ENCODE measurements at regions of chr1 and their contacts with region 1.

Region 1: GRCh38 chr1:92994105-92994712 is 32.9 kb upstream of the DIPK1A start:
- DNase-seq: peak; percentile 79
- ATAC-seq: peak; percentile 83
- H3K4me3 Mint-ChIP-seq: no peak overlapping the region
- H3K27ac Mint-ChIP-seq: no peak overlapping the region
- H3K4me1 Mint-ChIP-seq: peaks cover 35% of the 10 kb centered on the region
- H3K27me3 Mint-ChIP-seq: no peaks in the 10 kb centered on the region

Region 2: DNA sequence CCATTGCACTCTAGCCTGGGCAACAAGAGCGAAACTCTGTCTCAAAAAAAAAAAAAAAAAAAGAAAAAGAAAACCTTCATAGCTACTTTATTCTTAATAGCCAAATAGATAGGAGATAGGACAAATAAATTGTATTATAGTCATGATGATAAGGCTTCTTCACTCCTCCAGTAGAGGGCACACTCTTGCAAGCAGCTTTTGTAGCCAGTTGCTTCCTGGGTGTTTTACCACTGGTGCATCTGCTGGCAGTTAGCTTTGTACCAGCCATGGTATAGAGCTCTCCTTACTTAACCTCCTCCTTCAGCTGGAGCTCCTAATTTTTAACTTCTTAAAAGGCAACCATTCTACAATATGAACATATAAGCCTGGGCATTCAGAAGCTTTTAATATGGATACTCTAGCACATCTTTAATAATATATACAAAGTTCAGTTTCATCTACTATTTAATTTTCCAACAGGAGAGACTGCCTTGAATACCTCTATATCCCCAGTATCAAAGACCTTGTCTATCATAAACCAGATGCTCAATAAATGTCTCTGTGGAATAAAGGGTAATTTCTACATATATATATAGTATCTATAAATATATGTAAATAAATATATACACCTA is 245.1 kb before region 1 on chr1:
- CTCF ChIA-PET with region 1: interaction called, 7 read pairs
- POLR2A ChIA-PET with region 1: no interaction called
- intact Hi-C with region 1: loop called in 1 of 2 experiments (anchors 1 kb)
- DNase-seq: peak; percentile 55
- ATAC-seq: peak; percentile 76
- H3K4me3 Mint-ChIP-seq: no peak overlapping the region
- H3K27ac Mint-ChIP-seq: no peak overlapping the region
- H3K4me1 Mint-ChIP-seq: no peaks in the 10 kb centered on the region
- H3K27me3 Mint-ChIP-seq: no peaks in the 10 kb centered on the region

Region 3: DNA sequence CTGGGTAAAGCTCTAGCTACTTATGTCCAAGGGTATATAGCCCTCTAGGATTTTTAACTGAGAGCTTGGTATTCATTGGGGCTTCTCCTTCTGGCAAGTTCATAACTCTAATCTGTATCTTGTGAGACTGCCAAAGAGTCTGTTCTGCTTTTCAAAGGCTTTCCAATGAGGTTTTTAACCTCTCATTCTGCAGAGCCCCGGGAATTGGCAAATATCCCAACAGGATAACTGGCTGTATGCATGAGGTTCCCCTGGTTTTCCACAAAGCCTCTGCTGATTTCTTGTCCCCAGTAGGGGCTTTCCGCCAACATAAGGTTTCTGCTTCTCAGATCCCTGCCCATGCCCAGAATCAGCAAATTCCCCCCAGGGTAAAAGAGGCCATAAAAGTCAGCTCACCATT is 121.5 kb before region 1 on chr1:
- CTCF ChIA-PET with region 1: interaction called, 15 read pairs
- POLR2A ChIA-PET with region 1: no interaction called
- intact Hi-C with region 1: no loop called
- DNase-seq: no peak
- ATAC-seq: no peak
- H3K4me3 Mint-ChIP-seq: no peak overlapping the region
- H3K27ac Mint-ChIP-seq: no peak overlapping the region
- H3K4me1 Mint-ChIP-seq: peaks cover 20% of the 10 kb centered on the region
- H3K27me3 Mint-ChIP-seq: no peaks in the 10 kb centered on the region

Region 4: GRCh38 chr1:92944901-92945747 is 49.1 kb before region 1 on chr1:
- CTCF ChIA-PET with region 1: interaction called, 12 read pairs
- POLR2A ChIA-PET with region 1: no interaction called
- intact Hi-C with region 1: no loop called
- DNase-seq: no peak
- ATAC-seq: no peak
- H3K4me3 Mint-ChIP-seq: no peak overlapping the region
- H3K27ac Mint-ChIP-seq: no peak overlapping the region
- H3K4me1 Mint-ChIP-seq: peaks cover 55% of the 10 kb centered on the region
- H3K27me3 Mint-ChIP-seq: no peaks in the 10 kb centered on the region

Region 5: DNA sequence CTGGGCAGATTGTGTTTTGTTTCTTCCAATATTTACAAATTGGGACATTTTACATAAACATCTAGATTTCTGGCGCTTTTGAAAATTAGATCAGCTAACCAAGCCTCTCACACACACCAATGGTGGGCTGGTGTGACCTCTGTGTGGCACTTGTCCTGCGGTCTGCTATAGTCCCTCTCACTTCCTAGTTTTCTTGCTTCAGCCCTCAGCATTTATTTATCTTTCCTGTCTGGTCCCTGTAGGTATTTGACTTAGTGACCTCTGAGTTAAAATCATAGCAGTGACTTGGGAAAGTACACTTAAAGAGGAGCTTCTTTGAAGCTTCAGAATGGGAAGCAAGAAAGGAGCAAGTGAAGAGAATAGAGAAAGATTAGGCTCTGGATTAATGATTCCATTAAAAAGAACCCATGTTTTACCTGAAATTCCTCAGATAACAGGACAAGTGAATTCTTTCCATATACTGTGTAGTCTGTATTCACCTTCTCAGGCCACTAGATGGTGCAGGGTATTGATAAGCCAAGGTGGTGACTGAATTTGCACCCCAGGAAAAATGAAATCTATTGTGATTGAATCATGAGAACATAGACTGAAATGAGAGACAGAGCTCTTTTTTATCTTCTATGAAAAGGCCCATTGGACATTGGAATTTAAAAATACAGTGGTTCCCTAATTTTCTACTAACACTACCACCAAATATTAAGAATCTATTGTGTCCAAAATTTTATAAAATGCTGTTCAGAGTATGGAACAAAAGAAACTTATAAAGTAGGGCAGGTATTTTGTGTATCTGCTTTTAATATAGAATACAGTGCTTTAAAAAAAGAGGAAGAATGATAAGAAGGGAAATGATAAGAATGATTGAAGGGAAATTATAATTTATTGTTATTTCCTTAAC is 25.8 kb before region 1 on chr1:
- CTCF ChIA-PET with region 1: interaction called, 130 read pairs
- POLR2A ChIA-PET with region 1: no interaction called
- intact Hi-C with region 1: loop called (anchors 1 kb)
- DNase-seq: peak; percentile 32
- ATAC-seq: peak; percentile 70
- H3K4me3 Mint-ChIP-seq: no peak overlapping the region
- H3K27ac Mint-ChIP-seq: no peak overlapping the region
- H3K4me1 Mint-ChIP-seq: peaks cover 31% of the 10 kb centered on the region
- H3K27me3 Mint-ChIP-seq: no peaks in the 10 kb centered on the region

Region 6: GRCh38 chr1:93007941-93008577 is 13.8 kb after region 1 on chr1:
- CTCF ChIA-PET with region 1: interaction called, 20 read pairs
- POLR2A ChIA-PET with region 1: interaction called, 3 read pairs
- intact Hi-C with region 1: no loop called
- DNase-seq: no peak
- ATAC-seq: no peak
- H3K4me3 Mint-ChIP-seq: no peak overlapping the region
- H3K27ac Mint-ChIP-seq: no peak overlapping the region
- H3K4me1 Mint-ChIP-seq: peaks cover 10% of the 10 kb centered on the region
- H3K27me3 Mint-ChIP-seq: peaks cover 9% of the 10 kb centered on the region

Region 7: DNA sequence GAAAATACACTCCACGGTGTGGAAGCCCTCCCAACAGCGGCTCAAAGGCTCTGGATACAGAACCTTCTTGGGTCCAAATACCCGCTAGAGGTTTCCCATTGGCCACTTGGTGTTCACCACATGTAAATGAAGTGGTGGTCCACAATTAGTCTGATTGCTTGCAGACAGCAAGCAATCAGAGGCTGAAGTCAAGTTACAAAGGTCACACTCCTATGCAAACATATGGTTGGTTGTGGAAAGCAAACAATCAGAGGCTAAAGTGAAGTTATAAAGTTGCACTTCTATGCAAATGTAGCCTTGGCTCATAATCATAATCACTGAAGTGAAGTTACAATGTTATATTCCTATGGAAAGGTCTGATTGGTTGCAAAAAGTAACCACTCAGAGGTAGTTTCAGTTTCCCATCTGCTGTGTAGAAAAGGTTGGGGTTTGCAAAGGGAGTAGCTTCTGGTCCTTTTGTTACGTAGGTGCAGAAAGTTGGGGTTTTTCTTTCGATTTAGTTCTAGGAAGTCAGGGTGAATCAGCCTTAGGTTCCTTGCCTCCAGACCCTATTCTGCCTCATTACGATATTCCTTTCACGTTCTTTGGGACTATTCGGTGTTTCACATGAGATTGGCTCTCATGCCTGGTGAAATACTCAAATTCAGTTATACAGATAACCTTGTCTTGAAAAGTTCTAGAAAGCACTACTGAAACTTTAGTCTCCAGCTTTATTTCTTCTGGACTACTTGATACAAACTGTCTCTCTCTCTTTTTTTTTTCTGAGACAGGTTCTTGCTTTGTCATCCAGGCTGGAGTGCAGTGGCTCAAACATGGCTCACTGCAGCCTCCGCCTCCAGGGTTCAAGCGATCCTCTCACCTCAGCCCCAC is 48.2 kb after region 1 on chr1:
- CTCF ChIA-PET with region 1: no interaction called
- POLR2A ChIA-PET with region 1: no interaction called
- intact Hi-C with region 1: no loop called
- DNase-seq: peak; percentile 20
- ATAC-seq: peak; percentile 98
- H3K4me3 Mint-ChIP-seq: peak overlapping the region; percentile 56
- H3K27ac Mint-ChIP-seq: peak overlapping the region; percentile 92
- H3K4me1 Mint-ChIP-seq: peaks cover 30% of the 10 kb centered on the region
- H3K27me3 Mint-ChIP-seq: no peaks in the 10 kb centered on the region

Region 8: GRCh38 chr1:93244298-93245069 is 250.3 kb after region 1 on chr1:
- CTCF ChIA-PET with region 1: no interaction called
- POLR2A ChIA-PET with region 1: no interaction called
- intact Hi-C with region 1: no loop called
- DNase-seq: no peak
- ATAC-seq: no peak
- H3K4me3 Mint-ChIP-seq: no peak overlapping the region
- H3K27ac Mint-ChIP-seq: no peak overlapping the region
- H3K4me1 Mint-ChIP-seq: no peaks in the 10 kb centered on the region
- H3K27me3 Mint-ChIP-seq: no peaks in the 10 kb centered on the region